GM12878 (cell line): ENCODE measurements at regions of chr1 and their contacts with region 1.

Region 1: GRCh38 chr1:220733090-220733601 is 15.0 kb upstream of the MTARC2 start:
- DNase-seq: peak; percentile 13
- ATAC-seq: peak; percentile 96
- H3K4me3 ChIP-seq: no peak overlapping the region
- H3K27ac ChIP-seq: no peak overlapping the region
- H3K4me1 ChIP-seq: no peaks in the 10 kb centered on the region
- H3K27me3 ChIP-seq: no peaks in the 10 kb centered on the region
- CTCF ChIP-seq: peak; percentile 78 to 81 (median 80)
- EP300 ChIP-seq: no peak
- POLR2A ChIP-seq: no peak
- RAD21 ChIP-seq: peak; percentile 91

Region 2: DNA sequence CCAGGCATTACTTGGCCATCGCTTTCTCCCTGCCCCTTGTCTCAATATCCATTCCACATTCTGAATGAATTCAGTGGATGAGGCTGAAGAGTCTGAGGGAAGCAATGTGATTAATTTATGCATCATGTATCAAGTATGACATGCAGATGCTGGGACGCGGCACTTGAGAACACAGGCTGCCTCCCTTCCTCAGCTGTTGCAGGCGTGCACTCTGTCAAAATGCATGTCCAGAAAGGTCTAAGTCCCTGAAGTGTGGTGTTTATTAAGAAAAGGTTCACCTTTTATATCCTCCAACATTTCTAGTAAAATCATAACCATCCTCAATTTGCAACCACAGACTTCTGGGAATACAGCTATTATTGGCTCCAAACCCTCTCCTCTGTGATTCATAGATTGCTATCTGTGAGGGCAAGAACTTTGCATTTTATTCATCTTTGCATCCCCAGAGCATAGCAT is 438.3 kb before region 1 on chr1:
- CTCF ChIA-PET with region 1: interaction called, 22 read pairs
- POLR2A ChIA-PET with region 1: no interaction called
- RAD21 ChIA-PET with region 1: interaction called, 27 read pairs
- SMC1A ChIA-PET with region 1: interaction called, 7 read pairs
- in situ Hi-C with region 1: no loop called
- intact Hi-C with region 1: no loop called
- DNase-seq: no peak
- ATAC-seq: no peak
- H3K4me3 ChIP-seq: no peak overlapping the region
- H3K27ac ChIP-seq: no peak overlapping the region
- H3K4me1 ChIP-seq: no peaks in the 10 kb centered on the region
- H3K27me3 ChIP-seq: no peaks in the 10 kb centered on the region
- CTCF ChIP-seq: no peak
- EP300 ChIP-seq: no peak
- POLR2A ChIP-seq: no peak
- RAD21 ChIP-seq: no peak

Region 3: DNA sequence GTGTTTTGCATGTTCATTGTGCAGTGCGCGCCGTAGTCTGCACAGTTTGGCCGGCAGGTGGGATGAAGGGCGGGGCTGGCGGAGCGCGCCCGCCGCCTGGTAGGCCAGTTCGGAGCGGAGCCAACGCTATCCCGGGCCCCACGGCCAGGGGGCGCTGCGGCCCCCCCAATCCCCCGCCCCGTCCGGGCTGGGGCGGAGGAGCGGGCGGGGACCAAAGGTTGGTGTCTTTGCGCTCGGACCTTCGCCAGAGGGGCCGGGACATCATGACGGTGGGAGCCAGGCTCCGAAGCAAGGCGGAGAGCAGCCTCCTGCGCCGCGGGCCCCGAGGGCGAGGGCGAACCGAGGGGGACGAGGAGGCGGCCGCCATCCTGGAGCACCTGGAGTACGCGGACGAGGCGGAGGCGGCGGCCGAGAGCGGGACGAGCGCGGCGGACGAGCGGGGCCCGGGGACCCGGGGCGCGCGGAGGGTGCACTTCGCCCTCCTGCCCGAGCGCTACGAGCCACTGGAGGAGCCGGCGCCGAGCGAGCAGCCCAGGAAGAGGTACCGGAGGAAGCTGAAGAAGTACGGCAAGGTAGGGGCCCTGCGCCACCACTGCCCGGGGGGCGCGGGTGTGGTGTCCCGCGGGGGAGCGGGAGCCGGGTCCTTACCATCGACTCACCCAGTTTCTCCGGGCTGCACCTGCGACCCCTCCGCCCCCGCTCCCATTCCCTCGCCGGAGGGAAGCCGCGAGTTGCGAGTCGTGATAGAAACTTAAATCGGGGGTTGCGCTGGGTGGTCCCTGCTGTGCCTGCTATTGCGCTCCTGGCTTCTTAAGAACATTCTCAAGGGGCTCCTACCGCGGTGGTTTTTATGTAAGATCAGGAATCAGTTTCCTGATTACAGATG is 42.8 kb before region 1 on chr1 and contains the start of gene C1orf115:
- CTCF ChIA-PET with region 1: interaction called, 23 read pairs
- POLR2A ChIA-PET with region 1: interaction called, 3 read pairs
- RAD21 ChIA-PET with region 1: interaction called, 11 read pairs
- SMC1A ChIA-PET with region 1: interaction called, 14 read pairs
- in situ Hi-C with region 1: no loop called
- intact Hi-C with region 1: loop called (anchors 2 kb)
- DNase-seq: no peak
- ATAC-seq: peak; percentile 98
- H3K4me3 ChIP-seq: peak within 1 kb of the TSS; percentile 44; the same call in 1 of the 2 replicates
- H3K27ac ChIP-seq: no peak within 1 kb of the TSS
- H3K4me1 ChIP-seq: no peaks in the 10 kb centered on the region
- H3K27me3 ChIP-seq: 0 out of 4 replicates have a peak, but pooled peaks cover 0 to 1% of the 10 kb centered on the region in 2 experiments
- CTCF ChIP-seq: peak; percentile 76 to 95 (median 85)
- EP300 ChIP-seq: no peak
- POLR2A ChIP-seq: no peak
- RAD21 ChIP-seq: peak; percentile 54
- polyA plus RNA-seq, gene C1orf115: 0.52 to 0.95 TPM

Region 4: DNA sequence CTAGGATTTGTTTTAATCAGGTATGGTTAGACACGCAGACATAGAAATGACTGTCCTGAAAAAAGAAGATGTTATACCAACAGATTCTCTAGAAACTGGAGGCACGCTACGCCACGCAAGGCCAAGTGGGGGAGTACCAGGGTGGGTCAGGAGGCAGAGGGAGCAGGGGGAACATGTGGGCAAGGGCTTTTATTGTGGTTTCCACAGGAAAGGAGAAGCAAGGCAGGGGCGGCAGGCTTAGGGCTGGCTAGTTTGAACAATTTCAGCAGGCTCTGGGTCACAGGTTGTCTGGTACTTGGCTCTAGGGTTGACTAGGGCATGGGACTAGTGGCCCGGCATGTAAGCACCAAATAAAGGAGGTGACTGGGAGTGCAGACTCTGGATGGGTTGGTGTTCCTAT is 22.2 kb after region 1 on chr1:
- CTCF ChIA-PET with region 1: interaction called, 12 read pairs
- POLR2A ChIA-PET with region 1: no interaction called
- RAD21 ChIA-PET with region 1: interaction called, 4 read pairs
- SMC1A ChIA-PET with region 1: interaction called, 4 read pairs
- in situ Hi-C with region 1: no loop called
- intact Hi-C with region 1: no loop called
- DNase-seq: no peak
- ATAC-seq: no peak
- H3K4me3 ChIP-seq: no peak overlapping the region
- H3K27ac ChIP-seq: no peak overlapping the region
- H3K4me1 ChIP-seq: no peaks in the 10 kb centered on the region
- H3K27me3 ChIP-seq: no peaks in the 10 kb centered on the region; a peak in 1 of 4 replicates
- CTCF ChIP-seq: no peak
- EP300 ChIP-seq: no peak
- POLR2A ChIP-seq: no peak
- RAD21 ChIP-seq: no peak